H1 (cell line): ENCODE measurements at regions of chr15 and their contacts with region 1.

Region 1: DNA sequence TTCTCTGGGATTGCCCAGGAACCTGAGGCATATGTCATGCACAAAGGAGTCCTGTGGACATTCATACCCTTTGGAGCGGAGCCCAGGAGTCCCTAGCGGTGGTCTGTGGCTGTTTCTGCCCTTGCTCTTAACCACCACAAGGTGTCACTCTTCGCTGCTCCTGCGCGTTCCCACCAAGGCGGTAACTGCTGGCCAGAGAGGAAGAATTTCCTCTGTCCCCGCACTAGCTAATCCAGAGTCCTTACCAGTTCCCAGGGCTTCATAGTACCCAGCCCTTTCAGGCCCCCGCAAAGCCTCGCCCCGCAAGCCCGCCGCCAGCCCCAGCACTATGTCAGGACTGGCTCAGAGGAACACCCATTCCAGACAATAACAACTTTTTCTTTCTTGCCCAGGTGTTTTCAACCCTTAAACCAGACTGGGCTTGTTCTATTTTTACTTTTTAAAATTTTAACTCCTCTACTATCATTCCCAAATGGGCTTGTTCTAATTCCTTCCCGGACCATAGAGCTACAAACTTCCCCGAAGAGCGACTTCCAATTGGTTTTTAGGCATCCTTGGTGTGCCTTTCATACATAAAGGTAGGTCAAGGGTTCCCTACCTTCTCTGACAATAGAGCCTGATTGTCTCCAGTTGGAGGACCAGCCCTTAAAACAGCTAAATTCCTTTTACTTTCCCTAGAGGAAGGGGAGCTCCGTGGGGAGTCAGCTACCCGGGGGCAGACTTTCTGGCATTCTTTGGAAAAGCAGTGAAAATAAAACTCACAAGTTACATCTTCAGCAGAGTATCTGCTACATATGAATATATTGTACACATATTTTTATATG is 31.8 kb upstream of the ZNF774 start:
- DNase-seq: peak; percentile 78 to 79
- H3K4me3 ChIP-seq: peak overlapping the region in 3 of 4 experiments; percentile 1 to 55 (median 20); a peak in 4 of 8 replicates
- H3K27ac ChIP-seq: no peak overlapping the region
- H3K4me1 ChIP-seq: peaks cover 0 to 3% (median 1%) of the 10 kb centered on the region in 4 experiments; a peak in 3 of 7 replicates
- H3K27me3 ChIP-seq: no peaks in the 10 kb centered on the region
- CTCF ChIP-seq: peak; percentile 95 to 100 (median 99)
- EP300 ChIP-seq: peak in 1 of 2 experiments; percentile 56; a peak in 1 of 3 replicates
- POLR2A ChIP-seq: no peak
- RAD21 ChIP-seq: peak; percentile 99 to 100

Region 2: GRCh38 chr15:90300988-90301706 is 19.1 kb before region 1 on chr15:
- CTCF ChIA-PET with region 1: interaction called, 46 read pairs
- POLR2A ChIA-PET with region 1: no interaction called
- DNase-seq: peak; percentile 70 to 94
- H3K4me3 ChIP-seq: no peak overlapping the region
- H3K27ac ChIP-seq: no peak overlapping the region
- H3K4me1 ChIP-seq: peaks cover 0 to 4% (median 0%) of the 10 kb centered on the region in 4 experiments; a peak in 4 of 7 replicates
- H3K27me3 ChIP-seq: no peaks in the 10 kb centered on the region
- CTCF ChIP-seq: peak; percentile 86 to 99 (median 87)
- EP300 ChIP-seq: no peak
- POLR2A ChIP-seq: no peak
- RAD21 ChIP-seq: peak; percentile 50 to 61

Region 3: GRCh38 chr15:90343302-90343790 is 23.1 kb after region 1 on chr15:
- CTCF ChIA-PET with region 1: interaction called, 11 read pairs
- POLR2A ChIA-PET with region 1: no interaction called
- DNase-seq: no peak
- H3K4me3 ChIP-seq: no peak overlapping the region
- H3K27ac ChIP-seq: no peak overlapping the region
- H3K4me1 ChIP-seq: no peaks in the 10 kb centered on the region
- H3K27me3 ChIP-seq: no peaks in the 10 kb centered on the region
- CTCF ChIP-seq: no peak
- EP300 ChIP-seq: no peak
- POLR2A ChIP-seq: no peak
- RAD21 ChIP-seq: no peak

Region 4: GRCh38 chr15:90451053-90451850 is 131.0 kb after region 1 on chr15:
- CTCF ChIA-PET with region 1: interaction called, 19 read pairs
- POLR2A ChIA-PET with region 1: no interaction called
- DNase-seq: peak in 1 of 2 experiments; percentile 10
- H3K4me3 ChIP-seq: no peak overlapping the region
- H3K27ac ChIP-seq: no peak overlapping the region
- H3K4me1 ChIP-seq: peaks cover 0 to 5% (median 3%) of the 10 kb centered on the region in 4 experiments; a peak in 4 of 7 replicates
- H3K27me3 ChIP-seq: no peaks in the 10 kb centered on the region
- CTCF ChIP-seq: no peak
- EP300 ChIP-seq: no peak
- POLR2A ChIP-seq: no peak
- RAD21 ChIP-seq: no peak

Region 5: GRCh38 chr15:90497912-90498311 is 177.6 kb after region 1 on chr15:
- CTCF ChIA-PET with region 1: interaction called, 17 read pairs
- POLR2A ChIA-PET with region 1: no interaction called
- DNase-seq: no peak
- H3K4me3 ChIP-seq: no peak overlapping the region
- H3K27ac ChIP-seq: no peak overlapping the region
- H3K4me1 ChIP-seq: no peaks in the 10 kb centered on the region
- H3K27me3 ChIP-seq: no peaks in the 10 kb centered on the region
- CTCF ChIP-seq: no peak
- EP300 ChIP-seq: no peak
- POLR2A ChIP-seq: no peak
- RAD21 ChIP-seq: no peak